CD14-positive monocyte (primary cell): ENCODE measurements at regions of chr20 and their contacts with region 1.

Region 1: DNA sequence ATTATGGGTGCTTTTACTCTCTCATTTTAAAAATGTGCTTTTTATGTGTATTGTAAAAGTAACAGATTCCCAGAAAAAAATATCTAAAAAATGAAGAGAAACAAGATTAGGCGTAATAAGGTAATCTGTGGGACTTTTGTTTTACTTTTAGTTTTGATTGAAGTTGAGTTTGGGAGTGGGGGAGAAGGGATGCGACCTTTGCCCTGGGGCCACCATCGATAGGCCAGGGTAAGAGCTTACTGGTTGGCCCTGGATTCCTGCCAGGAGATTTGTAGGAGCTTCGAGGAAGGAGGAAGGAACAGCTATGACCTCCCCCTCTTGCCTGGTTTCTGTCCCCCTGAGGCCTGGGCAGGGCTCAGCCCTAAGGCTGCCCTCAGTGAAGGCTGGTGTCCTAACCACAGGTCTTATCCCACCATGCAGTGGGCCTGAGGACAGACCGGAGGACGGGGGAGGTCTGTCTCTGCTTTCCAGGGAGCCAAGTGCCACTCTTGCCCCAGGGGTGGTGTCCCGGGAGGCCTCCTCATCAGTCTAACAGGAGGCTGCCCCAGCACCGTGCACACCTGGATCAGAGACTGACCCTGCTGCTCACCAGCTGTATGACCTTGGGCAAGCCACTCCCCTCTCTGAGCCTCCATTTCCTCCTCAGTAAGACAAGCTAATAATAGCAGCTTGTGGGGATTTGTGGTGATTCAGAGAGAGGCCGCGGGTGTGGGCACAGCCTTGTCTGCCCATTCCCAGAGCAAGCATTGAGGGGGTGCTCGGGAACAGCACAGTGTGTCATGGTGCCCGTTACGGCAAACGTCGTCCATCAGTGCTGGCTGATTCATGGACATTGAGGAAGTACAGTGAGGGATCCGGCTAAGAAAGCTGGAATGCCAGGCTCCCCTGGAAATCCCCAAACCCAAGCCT is 21.2 kb downstream of the TGM2 start:
- DNase-seq: peak; percentile 89 to 98 (median 90)
- H3K4me3 ChIP-seq: peak overlapping the region in 1 of 3 experiments; percentile 41
- H3K4me3 Mint-ChIP-seq: peak overlapping the region; percentile 47 to 85
- H3K27ac ChIP-seq: peak overlapping the region; percentile 46 to 87
- H3K27ac Mint-ChIP-seq: peak overlapping the region; percentile 82 to 92 (median 87)
- H3K4me1 ChIP-seq: peaks cover 36 to 55% of the 10 kb centered on the region in 2 donors
- H3K4me1 Mint-ChIP-seq: peaks cover 58% of the 10 kb centered on the region
- H3K27me3 ChIP-seq: no peaks in the 10 kb centered on the region
- H3K27me3 Mint-ChIP-seq: peaks cover 1 to 2% (median 2%) of the 10 kb centered on the region in 3 donors
- CTCF ChIP-seq: no peak

Region 2: DNA sequence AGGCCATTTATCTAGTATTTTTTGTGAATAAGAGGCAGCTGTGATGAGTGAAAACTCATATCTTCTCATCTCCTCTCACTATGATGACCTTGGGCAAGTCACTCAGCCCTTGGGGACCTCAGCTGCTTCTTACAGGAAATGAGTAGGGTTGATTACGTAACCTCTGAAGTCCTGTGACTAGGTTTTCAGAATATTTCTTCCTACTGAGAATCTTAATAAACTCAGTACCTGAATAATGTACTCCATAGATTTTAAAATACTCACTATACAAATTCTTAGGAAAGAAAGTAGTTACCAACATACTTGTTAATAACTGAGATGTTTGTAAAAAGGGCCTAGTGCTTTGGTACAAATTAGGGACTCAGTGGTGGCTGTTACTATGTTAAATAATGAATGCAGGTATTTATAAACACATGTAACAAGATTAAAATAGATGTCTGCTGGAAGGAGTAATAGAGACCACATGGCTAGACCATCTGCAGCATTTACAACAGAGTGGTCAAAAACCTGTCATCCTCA is 49.5 kb before region 1 on chr20:
- intact Hi-C with region 1: loop called (anchors 2 to 5 kb)
- DNase-seq: peak; percentile 87 to 96 (median 95)
- H3K4me3 ChIP-seq: peak overlapping the region in 1 of 3 experiments; percentile 48
- H3K4me3 Mint-ChIP-seq: peak overlapping the region in 1 of 2 donors; percentile 85
- H3K27ac ChIP-seq: peak overlapping the region; percentile 96 to 98
- H3K27ac Mint-ChIP-seq: peak overlapping the region; percentile 98 to 100 (median 99)
- H3K4me1 ChIP-seq: peaks cover 56 to 70% of the 10 kb centered on the region in 2 donors
- H3K4me1 Mint-ChIP-seq: peaks cover 66% of the 10 kb centered on the region
- H3K27me3 ChIP-seq: no peaks in the 10 kb centered on the region
- H3K27me3 Mint-ChIP-seq: peaks cover 0 to under 1% (median 0%) of the 10 kb centered on the region in 3 donors
- CTCF ChIP-seq: no peak